ENCODE measurements at regions of chr22 and their contacts with region 1.

Region 1: GRCh38 chr22:38705235-38706100 is at the start of gene GTPBP1:
- DNase-seq: peak; percentile 94 to 99 (median 98)
- H3K4me3 ChIP-seq: peak within 1 kb of the TSS; percentile 82
- H3K4me3 Mint-ChIP-seq: peak within 1 kb of the TSS; percentile 91 to 95 (median 93)
- H3K27ac ChIP-seq: peak within 1 kb of the TSS; percentile 74
- H3K27ac Mint-ChIP-seq: peak within 1 kb of the TSS; percentile 89 to 100 (median 98)
- H3K4me1 ChIP-seq: peaks cover 48% of the 10 kb centered on the region
- H3K4me1 Mint-ChIP-seq: peaks cover 55 to 69% (median 60%) of the 10 kb centered on the region in 3 donors
- H3K27me3 ChIP-seq: no peaks in the 10 kb centered on the region
- H3K27me3 Mint-ChIP-seq: peaks cover 0 to 5% of the 10 kb centered on the region in 2 donors
- total RNA-seq, gene GTPBP1: 62.7 to 63.7 TPM

Region 2: DNA sequence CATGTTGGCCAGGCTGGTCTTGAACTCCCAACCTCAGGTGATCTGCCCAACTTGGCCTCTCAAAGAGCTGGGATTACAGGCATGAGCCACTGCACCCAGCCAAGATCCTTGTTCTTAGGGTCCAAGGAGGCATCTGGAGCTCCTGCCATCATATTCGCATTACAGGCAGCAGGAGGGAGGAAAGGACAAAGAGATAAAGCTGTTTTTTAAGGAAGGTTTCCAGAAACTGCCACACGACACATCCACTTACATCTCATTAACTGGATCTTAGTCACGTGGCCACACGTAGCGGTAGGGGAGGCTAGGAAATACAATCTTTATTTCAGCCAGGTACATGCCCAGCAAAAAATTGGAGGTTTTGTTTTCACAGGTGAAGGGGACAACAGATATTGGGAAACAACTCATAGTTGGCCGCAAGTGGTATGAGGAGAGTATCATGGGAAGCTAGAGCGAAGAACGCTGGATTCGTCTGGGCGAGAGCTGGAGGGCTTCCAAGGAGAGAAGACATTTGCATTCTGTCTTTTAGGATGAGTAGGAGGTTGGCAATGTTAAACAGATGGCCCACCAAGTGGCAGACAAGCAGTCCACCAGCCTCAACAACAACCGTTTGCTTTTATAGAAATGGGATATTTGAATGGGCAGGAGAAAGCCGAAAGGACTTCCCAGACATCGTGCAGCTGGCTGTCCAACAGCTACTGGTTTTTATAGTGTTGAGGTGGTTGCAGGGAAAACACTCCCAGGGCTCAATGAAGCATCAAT is 96.3 kb before region 1 on chr22:
- CTCF ChIA-PET with region 1: no interaction called
- POLR2A ChIA-PET with region 1: no interaction called
- DNase-seq: no peak
- H3K4me3 ChIP-seq: no peak overlapping the region
- H3K4me3 Mint-ChIP-seq: no peak overlapping the region
- H3K27ac ChIP-seq: no peak overlapping the region
- H3K27ac Mint-ChIP-seq: no peak overlapping the region
- H3K4me1 ChIP-seq: no peaks in the 10 kb centered on the region
- H3K4me1 Mint-ChIP-seq: no peaks in the 10 kb centered on the region
- H3K27me3 ChIP-seq: no peaks in the 10 kb centered on the region
- H3K27me3 Mint-ChIP-seq: peaks cover 10 to 11% of the 10 kb centered on the region in 2 donors

Region 3: DNA sequence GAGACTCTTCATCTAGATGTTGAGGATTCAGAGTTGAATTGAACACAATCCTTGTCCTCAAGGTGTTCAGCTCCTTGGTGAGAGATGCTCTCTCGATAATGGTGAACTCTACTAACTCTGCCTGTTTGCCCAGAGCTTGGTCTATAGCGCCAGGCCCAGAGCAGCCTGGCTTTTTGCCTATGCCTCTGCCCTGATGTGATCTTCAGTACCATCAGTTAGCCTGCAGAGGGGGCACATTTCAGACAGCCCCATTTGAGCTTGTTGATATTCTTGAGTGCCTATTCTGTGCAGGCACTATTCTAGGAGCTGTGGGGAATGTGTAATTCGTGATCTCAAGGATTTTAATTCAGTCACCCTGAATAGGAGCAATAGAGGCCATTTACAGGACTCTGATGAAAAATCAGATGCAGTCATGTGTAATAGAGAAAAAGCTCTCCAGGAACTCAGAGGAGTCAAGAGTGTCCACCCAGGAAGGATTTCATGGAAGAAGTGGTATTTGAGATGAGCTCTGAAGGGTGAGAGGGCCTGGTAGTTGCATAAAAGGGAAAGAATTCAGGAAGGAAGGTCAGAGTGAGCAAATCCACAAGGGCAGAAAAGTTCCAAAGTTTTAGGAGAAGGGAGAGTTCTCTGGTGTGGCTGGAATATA is 19.6 kb after region 1 on chr22:
- CTCF ChIA-PET with region 1: interaction called, 4 read pairs
- POLR2A ChIA-PET with region 1: interaction called, 19 read pairs
- DNase-seq: peak in 1 of 5 donors; percentile 42
- H3K4me3 ChIP-seq: no peak overlapping the region
- H3K4me3 Mint-ChIP-seq: peak overlapping the region in 2 of 7 donors; percentile 0 to 27
- H3K27ac ChIP-seq: no peak overlapping the region
- H3K27ac Mint-ChIP-seq: peak overlapping the region in 7 of 8 donors; percentile 5 to 95 (median 84)
- H3K4me1 ChIP-seq: peaks cover 4% of the 10 kb centered on the region
- H3K4me1 Mint-ChIP-seq: peaks cover 9 to 18% (median 13%) of the 10 kb centered on the region in 3 donors
- H3K27me3 ChIP-seq: no peaks in the 10 kb centered on the region
- H3K27me3 Mint-ChIP-seq: peaks cover 0 to 1% of the 10 kb centered on the region in 2 donors

Region 4: GRCh38 chr22:38907767-38908166 is 202.3 kb after region 1 on chr22:
- CTCF ChIA-PET with region 1: no interaction called
- POLR2A ChIA-PET with region 1: no interaction called
- DNase-seq: no peak
- H3K4me3 ChIP-seq: no peak overlapping the region
- H3K4me3 Mint-ChIP-seq: no peak overlapping the region
- H3K27ac ChIP-seq: no peak overlapping the region
- H3K27ac Mint-ChIP-seq: no peak overlapping the region
- H3K4me1 ChIP-seq: no peaks in the 10 kb centered on the region
- H3K4me1 Mint-ChIP-seq: no peaks in the 10 kb centered on the region
- H3K27me3 ChIP-seq: no peaks in the 10 kb centered on the region
- H3K27me3 Mint-ChIP-seq: peaks cover 15 to 52% of the 10 kb centered on the region in 2 donors